Heart right ventricle (tissue), 16 donors: ENCODE measurements at regions of chr22 and their contacts with region 1.

Region 1: DNA sequence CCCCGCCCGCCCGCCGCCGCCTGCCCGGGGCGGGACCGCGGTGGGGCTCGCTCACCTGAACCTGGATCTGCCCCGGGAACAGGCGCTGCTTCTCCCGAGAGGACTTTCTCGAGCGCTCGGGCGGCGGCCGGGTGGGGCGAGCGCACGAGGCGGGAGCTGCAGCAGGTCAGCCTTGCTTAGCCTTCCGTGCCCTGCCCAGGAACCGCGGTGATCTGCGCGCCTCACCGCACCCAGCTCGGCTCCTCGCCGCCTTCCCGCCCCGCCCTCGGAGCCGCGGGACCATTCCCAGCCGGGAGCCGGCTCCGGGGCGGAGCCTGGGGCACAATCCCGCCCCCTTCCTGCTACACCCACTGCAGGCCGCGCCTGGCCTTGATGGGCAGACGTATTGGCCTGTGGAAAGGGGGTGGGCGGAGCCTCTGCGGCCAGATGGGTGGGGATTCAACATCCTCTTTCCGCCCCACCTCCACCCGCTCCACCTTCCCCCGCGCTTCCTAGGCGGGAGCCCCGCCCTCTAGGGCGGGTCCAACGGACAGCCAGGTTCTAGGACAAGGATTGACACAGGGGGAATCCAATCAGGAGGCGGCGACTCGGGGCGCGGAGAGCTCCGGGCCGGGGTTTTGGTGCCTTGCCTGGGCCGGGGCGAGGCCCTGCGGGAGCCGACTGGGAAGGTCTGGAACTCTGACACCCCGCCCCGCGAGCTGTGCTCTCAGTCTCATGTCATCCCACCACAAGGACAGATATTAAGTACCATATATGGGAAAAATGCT is at the start of gene MYH9:
- DNase-seq: peak; percentile 100
- ATAC-seq: peak; percentile 92 to 97 (median 95)
- H3K4me3 ChIP-seq: peak within 1 kb of the TSS; percentile 87 to 100 (median 96)
- H3K27ac ChIP-seq: peak within 1 kb of the TSS; percentile 97 to 100 (median 99)
- H3K4me1 ChIP-seq: peaks cover 5 to 60% (median 42%) of the 10 kb centered on the region in 9 donors
- H3K27me3 ChIP-seq: no peaks in the 10 kb centered on the region
- CTCF ChIP-seq: no peak
- total RNA-seq, gene MYH9: 132 to 345 (median 189) TPM

Region 2: GRCh38 chr22:36325154-36326031 is 62.5 kb before region 1 on chr22:
- intact Hi-C with region 1: loop called in 7 of 10 experiments (anchors 2 to 10 kb)
- DNase-seq: peak in 1 of 2 donors; percentile 71
- ATAC-seq: peak in 6 of 8 donors; percentile 7 to 12 (median 10)
- H3K4me3 ChIP-seq: no peak overlapping the region
- H3K27ac ChIP-seq: peak overlapping the region; percentile 84 to 98 (median 96)
- H3K4me1 ChIP-seq: peaks cover 76 to 99% (median 94%) of the 10 kb centered on the region in 9 donors
- H3K27me3 ChIP-seq: no peaks in the 10 kb centered on the region
- CTCF ChIP-seq: no peak

Region 3: DNA sequence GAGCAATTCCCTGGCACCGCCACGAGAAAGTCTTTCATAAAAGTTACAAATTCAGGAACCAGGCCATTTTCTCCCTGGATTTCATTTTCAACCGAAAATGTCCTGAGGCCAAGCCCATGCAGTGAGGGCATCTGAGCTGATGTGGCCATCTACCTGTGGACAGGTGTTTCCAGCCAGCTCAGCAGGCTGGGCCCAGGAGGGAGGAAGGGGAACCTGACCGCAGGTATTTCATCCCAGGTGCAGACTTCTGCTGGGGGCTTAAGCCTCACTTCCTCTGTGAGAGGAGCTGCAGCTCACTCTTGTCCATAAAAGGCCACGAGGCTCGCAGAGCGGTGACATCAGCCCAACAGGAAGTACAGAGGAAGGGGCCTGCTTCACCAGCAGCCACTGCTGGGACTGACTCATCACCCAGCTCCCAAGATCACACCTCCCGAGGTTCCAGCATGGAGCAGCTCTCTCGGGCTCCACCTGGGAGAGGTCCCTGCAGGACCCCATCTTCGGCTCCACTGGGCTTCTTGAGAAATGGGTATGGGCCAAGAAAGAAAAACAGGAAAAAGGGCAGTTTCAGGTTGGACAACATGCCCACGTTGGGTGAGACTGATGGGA is 56.5 kb before region 1 on chr22:
- intact Hi-C with region 1: loop called in 6 of 10 experiments (anchors 2 to 10 kb)
- DNase-seq: peak; percentile 76 to 85
- ATAC-seq: peak; percentile 31 to 70 (median 63)
- H3K4me3 ChIP-seq: peak overlapping the region in 6 of 10 donors; percentile 6 to 23 (median 12)
- H3K27ac ChIP-seq: peak overlapping the region; percentile 84 to 98 (median 96)
- H3K4me1 ChIP-seq: peaks cover 83 to 100% (median 100%) of the 10 kb centered on the region in 9 donors
- H3K27me3 ChIP-seq: no peaks in the 10 kb centered on the region
- CTCF ChIP-seq: no peak

Region 4: DNA sequence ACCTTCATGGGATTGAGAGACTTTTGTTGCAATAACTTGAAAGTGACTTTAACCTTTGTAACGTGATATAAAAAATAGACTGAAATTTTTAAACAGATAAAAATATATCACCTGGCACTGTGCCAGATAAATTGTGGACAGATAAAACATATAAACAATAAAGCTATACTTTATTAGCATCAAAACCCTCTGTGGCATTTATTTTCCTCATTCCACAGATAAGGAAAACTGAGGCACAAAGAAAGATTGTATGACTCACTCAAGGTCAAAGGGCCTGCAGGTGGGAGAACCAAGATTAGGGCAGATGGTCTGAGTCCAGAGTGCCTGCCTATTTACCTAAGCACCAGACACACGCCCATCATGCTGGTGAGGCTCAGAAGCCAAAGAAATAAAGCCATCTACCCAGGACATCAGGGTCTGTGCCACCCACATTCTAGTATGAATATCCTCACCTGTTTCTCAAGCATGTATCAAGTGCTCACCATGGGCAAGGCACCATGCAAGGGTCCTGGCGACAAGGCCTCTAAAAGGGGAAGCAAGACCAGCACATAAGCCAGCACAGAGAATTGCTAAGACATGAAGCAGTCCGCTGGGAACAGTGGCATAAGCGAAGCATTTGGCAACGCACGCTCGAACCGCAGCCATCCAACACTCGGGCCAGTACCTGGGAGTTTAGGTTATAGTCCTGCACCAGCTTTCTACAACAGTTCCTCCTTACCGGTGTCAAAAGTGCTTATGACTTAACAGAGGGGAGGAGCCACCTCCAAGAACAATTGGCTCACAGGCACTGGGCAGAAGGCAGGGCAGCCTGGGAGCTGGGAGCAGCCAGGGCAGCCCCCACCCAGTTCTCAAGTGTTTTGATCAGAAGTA is 17.8 kb before region 1 on chr22:
- intact Hi-C with region 1: loop called in 1 of 10 experiments (anchors 2 kb)
- DNase-seq: peak in 1 of 2 donors; percentile 55
- ATAC-seq: peak; percentile 40 to 70 (median 58)
- H3K4me3 ChIP-seq: peak overlapping the region in 8 of 10 donors; percentile 9 to 30 (median 24)
- H3K27ac ChIP-seq: peak overlapping the region; percentile 74 to 93 (median 84)
- H3K4me1 ChIP-seq: peaks cover 93 to 100% (median 100%) of the 10 kb centered on the region in 9 donors
- H3K27me3 ChIP-seq: no peaks in the 10 kb centered on the region
- CTCF ChIP-seq: no peak

Region 5: DNA sequence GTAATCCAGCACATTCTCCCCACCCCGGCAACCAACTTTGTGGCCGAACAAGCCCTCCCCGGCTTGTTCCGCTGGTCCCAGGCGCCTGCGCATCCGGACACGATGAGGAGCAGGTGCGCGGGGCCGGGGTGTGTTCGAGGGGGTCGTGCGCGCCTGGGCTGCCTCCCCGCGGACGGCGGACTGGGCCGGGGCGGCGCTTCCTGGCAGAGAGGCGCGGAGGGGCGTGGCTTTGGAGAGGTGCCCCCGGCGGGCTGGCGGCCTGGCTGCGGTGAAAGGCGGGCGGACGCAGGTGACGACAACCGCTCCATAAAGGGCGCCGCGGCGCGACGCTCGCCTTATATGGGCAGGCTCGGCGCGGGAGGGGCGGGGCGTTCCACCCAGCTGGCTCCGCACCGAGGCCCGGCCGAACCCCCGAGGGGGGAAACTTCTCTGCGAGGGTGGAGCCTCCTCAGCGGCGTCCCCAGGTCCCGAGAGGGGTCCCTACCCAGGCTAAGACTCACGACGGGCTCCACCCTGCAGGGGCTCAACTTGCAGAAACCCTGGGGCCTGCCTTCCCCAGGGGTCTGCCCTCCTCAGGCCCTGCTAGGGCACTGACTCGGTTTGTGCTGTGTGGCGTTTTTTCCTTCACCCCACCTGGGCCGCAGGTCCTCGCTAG is 67.1 kb after region 1 on chr22:
- intact Hi-C with region 1: loop called in 6 of 10 experiments (anchors 5 kb)
- DNase-seq: peak; percentile 93 to 94
- ATAC-seq: peak; percentile 85 to 92 (median 88)
- H3K4me3 ChIP-seq: peak overlapping the region in 9 of 10 donors; percentile 37 to 59 (median 54)
- H3K27ac ChIP-seq: peak overlapping the region; percentile 72 to 97 (median 94)
- H3K4me1 ChIP-seq: peaks cover 24 to 86% (median 65%) of the 10 kb centered on the region in 9 donors
- H3K27me3 ChIP-seq: no peaks in the 10 kb centered on the region
- CTCF ChIP-seq: peak in 4 of 9 donors; percentile 16 to 48 (median 40)

Region 6: DNA sequence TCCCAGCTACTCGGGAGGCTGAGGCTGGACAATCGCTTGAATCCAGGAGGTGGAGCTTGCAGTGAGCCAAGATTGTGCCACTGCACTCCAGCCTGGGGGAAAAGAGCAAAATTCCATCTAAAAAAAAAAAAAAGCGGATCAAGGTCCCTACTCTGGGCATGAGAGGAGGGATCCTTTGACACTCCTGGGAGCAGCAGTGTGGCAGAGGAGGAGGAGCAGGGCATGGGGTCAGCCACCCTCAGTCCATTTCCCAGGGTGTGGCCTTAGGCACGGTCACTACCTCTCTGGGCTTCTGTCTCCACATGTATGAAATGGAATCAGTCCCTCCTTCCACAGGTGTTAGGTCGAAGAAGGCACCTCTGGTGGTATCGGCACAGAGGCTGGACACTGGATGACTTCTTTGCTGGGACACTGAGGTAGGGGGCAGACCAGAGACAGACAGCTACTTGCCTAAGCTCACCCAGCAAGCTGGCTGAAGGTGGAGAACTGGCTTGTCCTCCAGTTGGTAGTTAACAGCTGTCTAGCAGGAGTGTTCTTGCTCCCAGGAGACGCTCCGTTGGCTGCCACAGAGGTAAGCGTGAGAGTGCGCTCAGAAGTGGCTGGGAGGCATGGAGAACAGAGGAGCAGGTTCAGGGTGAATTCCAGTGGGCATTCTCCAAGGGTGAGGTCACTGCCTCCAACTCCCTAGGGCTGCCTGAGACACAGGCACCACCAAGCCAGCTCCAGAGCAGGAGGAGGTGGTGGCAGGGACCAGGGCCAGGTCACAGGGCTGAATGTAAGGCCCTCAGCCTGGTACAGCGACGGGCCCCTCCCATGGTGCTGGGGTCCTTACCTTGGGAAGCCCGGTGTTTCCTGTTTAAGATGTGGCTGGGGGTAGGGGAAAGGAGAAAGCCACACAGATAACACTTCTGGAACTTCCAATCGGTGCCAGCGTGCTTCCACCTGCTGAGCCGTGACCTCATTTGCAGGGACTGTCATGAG is 74.0 kb after region 1 on chr22:
- intact Hi-C with region 1: loop called in 6 of 10 experiments (anchors 5 kb)
- DNase-seq: no peak
- ATAC-seq: peak in 6 of 8 donors; percentile 1 to 41 (median 22)
- H3K4me3 ChIP-seq: no peak overlapping the region
- H3K27ac ChIP-seq: peak overlapping the region; percentile 62 to 97 (median 90)
- H3K4me1 ChIP-seq: peaks cover 21 to 83% (median 73%) of the 10 kb centered on the region in 9 donors
- H3K27me3 ChIP-seq: no peaks in the 10 kb centered on the region
- CTCF ChIP-seq: no peak

Region 7: GRCh38 chr22:36546092-36546804 is 158.3 kb after region 1 on chr22:
- intact Hi-C with region 1: no loop called
- DNase-seq: peak in 1 of 2 donors; percentile 25
- ATAC-seq: peak in 7 of 8 donors; percentile 57 to 71 (median 64)
- H3K4me3 ChIP-seq: no peak overlapping the region
- H3K27ac ChIP-seq: no peak overlapping the region
- H3K4me1 ChIP-seq: peaks cover 0 to 5% (median 0%) of the 10 kb centered on the region in 9 donors
- H3K27me3 ChIP-seq: peaks cover 5 to 49% (median 29%) of the 10 kb centered on the region in 7 donors
- CTCF ChIP-seq: peak in 8 of 9 donors; percentile 33 to 72 (median 62)